AG04450 (cell line): ENCODE measurements at regions of chr10 and their contacts with region 1.

Region 1: GRCh38 chr10:126090911-126091728 is 194.8 kb downstream of the FANK1 start:
- DNase-seq: peak; percentile 76
- H3K4me3 ChIP-seq: no peak overlapping the region
- H3K27ac ChIP-seq: peak overlapping the region; percentile 42
- H3K27me3 ChIP-seq: no peaks in the 10 kb centered on the region
- CTCF ChIP-seq: no peak

Region 2: DNA sequence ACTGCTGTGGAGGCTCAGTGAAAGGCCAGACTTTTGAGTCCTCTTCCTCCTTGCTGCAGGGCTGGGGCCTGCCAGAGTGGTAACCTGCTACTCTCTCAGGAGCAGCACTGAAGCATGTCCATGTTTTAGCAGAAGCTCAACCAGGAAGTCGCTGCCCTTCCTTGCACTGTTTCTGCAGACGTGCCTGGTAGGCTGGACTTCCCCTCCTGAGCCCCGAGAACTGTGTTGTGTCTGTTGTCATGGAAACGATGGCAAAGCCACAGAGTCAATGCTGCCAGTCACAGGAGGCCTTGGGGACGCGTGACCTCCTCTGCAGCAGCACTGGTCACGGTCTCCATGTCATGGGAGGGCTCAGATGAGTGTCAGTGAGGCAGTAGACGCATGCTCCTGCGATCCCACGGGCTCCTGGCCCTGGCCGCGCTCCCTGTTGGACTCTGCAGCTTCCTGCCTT is 49.3 kb before region 1 on chr10:
- CTCF ChIA-PET with region 1: no interaction called
- POLR2A ChIA-PET with region 1: no interaction called
- DNase-seq: no peak
- H3K4me3 ChIP-seq: no peak overlapping the region
- H3K27ac ChIP-seq: no peak overlapping the region
- H3K27me3 ChIP-seq: no peaks in the 10 kb centered on the region
- CTCF ChIP-seq: no peak

Region 3: DNA sequence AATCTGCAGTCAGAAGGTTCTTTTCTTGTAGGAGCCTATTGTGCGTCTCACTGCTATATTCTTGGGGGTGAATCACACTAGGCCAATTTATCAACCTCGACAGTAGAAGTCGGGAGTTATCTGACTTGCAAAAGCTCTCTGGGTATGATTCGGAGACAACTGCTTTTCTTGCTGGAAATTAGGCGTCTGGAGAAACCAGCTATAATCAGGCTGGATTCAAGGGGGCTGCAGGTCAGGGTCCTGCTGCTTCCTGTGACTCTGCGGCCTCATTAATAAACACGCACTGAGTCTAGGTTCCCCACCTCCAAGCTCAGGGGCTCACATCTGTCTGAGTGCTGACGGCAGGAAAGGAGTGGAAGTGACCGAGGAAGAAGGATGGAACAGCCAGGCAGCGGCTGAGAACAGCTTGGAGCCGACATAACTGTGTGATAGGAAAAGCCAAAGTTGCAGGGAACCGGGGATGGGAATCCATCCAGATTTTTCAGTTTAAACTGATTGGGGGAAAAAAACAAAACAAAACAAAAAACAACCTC is 10.2 kb before region 1 on chr10:
- CTCF ChIA-PET with region 1: no interaction called
- POLR2A ChIA-PET with region 1: interaction called, 10 read pairs
- DNase-seq: peak; percentile 44
- H3K4me3 ChIP-seq: peak overlapping the region; percentile 35
- H3K27ac ChIP-seq: peak overlapping the region; percentile 33
- H3K27me3 ChIP-seq: no peaks in the 10 kb centered on the region
- CTCF ChIP-seq: no peak